ENCODE measurements at regions of chr11 and their contacts with region 1.

Region 1: DNA sequence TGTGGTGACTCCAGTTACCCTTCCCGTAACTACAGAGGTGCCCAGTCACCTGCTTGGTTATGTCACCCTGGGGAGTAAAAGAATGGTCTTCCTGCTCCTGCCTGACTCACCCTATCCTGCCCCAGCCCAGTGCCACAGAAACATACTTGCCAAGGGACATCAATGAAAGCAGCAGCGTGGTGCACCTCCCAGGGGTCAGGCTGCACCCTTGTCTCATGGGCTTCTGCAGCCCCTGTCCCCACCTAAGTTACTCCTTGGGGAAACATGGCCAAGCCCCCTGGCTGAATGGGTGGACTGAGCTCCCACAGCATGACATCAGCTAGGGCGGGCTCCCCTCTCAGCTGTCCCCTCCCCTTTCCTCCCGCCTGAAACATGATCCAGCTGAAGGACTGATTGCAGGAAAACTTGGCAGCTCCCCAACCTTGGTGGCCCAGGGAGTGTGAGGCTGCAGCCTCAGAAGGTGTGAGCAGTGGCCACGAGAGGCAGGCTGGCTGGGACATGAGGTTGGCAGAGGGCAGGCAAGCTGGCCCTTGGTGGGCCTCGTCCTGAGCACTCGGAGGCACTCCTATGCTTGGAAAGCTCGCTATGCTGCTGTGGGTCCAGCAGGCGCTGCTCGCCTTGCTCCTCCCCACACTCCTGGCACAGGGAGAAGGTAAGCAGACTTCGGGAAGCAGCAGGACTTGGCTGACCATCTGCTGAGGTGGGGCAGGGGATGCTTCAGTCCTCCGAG is at the start of gene HTR3A:
- DNase-seq: peak; percentile 63
- ATAC-seq: peak; percentile 90
- H3K4me3 Mint-ChIP-seq: peak within 1 kb of the TSS; percentile 50
- H3K27ac Mint-ChIP-seq: no peak within 1 kb of the TSS; the same call in 1 of the 2 replicates
- H3K4me1 Mint-ChIP-seq: peaks cover 30% of the 10 kb centered on the region
- H3K27me3 Mint-ChIP-seq: peaks cover 9% of the 10 kb centered on the region; the same call in 1 of the 2 replicates
- CTCF ChIP-seq: no peak
- total RNA-seq, gene HTR3A: 4.1 to 6.0 TPM (median 5.0 TPM) in 3 replicates

Region 2: GRCh38 chr11:113875234-113876073 is 99.5 kb before region 1 on chr11 and contains the start of gene USP28:
- CTCF ChIA-PET with region 1: no interaction called
- POLR2A ChIA-PET with region 1: no interaction called
- DNase-seq: peak; percentile 95
- ATAC-seq: peak; percentile 89
- H3K4me3 Mint-ChIP-seq: peak within 1 kb of the TSS; percentile 89
- H3K27ac Mint-ChIP-seq: peak within 1 kb of the TSS; percentile 100
- H3K4me1 Mint-ChIP-seq: peaks cover 52% of the 10 kb centered on the region
- H3K27me3 Mint-ChIP-seq: peaks cover 2% of the 10 kb centered on the region; the same call in 1 of the 2 replicates
- CTCF ChIP-seq: no peak
- total RNA-seq, gene USP28: 129 to 142 TPM (median 138 TPM) in 3 replicates

Region 3: GRCh38 chr11:113994077-113994954 is 19.4 kb after region 1 on chr11:
- CTCF ChIA-PET with region 1: interaction called, 19 read pairs
- POLR2A ChIA-PET with region 1: no interaction called
- DNase-seq: peak; percentile 73
- ATAC-seq: peak; percentile 68
- H3K4me3 Mint-ChIP-seq: no peak overlapping the region
- H3K27ac Mint-ChIP-seq: no peak overlapping the region; the same call in 1 of the 2 replicates
- H3K4me1 Mint-ChIP-seq: peaks cover 21% of the 10 kb centered on the region
- H3K27me3 Mint-ChIP-seq: no peaks in the 10 kb centered on the region
- CTCF ChIP-seq: peak; percentile 83